MCF 10A (cell line): ENCODE measurements at regions of chr6 and their contacts with region 1.

Region 1: DNA sequence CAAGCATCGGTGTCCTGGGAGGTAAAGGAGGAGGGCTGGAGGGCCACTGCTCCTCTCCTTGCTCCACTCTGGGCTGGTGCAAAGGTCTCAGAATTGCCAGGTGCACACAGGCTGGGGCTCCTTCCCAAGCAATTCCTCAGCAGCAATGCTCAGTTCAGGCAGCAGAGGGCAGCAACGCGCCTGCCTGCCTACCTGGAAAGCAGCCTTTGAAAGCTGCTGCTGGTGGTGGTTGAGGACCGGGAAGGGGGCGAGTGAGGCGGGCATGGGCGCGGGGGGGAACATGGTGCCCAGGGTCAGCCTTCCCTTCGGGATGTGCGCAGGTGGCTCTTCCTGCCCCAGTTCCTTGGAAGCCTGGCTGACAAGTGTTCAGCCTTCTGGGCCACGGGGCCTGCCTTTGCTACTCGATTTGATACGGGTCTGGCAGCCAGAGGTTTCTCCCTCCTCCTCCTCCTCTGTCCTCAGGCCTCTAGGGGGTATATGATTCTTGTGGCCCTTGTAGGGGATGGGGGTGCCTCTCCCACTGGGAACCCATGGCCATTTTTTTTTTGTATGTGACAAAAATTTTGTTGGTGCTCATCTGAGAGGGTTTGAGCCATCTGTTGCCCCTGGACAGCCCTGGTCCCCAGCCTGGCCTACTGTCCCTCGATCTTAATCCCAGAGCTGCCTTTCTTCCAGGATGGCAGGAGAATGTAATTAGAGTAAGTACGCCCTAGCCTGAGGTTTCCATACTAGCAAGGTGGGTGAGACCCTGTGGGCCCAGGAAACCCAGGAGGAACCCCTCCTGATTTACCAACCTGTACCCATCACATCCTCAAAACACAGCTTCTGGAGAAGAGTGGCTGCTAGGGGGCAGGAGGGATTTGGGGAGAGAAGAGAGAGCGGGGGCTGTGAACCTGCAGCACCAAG is 20.1 kb downstream of the MRPS18A start:
- DNase-seq: peak; percentile 81
- H3K4me3 Mint-ChIP-seq: peak overlapping the region; percentile 3
- H3K27ac Mint-ChIP-seq: peak overlapping the region; percentile 71
- H3K4me1 Mint-ChIP-seq: peaks cover 30% of the 10 kb centered on the region
- H3K27me3 Mint-ChIP-seq: no peaks in the 10 kb centered on the region
- CTCF ChIP-seq: peak; percentile 87

Region 2: DNA sequence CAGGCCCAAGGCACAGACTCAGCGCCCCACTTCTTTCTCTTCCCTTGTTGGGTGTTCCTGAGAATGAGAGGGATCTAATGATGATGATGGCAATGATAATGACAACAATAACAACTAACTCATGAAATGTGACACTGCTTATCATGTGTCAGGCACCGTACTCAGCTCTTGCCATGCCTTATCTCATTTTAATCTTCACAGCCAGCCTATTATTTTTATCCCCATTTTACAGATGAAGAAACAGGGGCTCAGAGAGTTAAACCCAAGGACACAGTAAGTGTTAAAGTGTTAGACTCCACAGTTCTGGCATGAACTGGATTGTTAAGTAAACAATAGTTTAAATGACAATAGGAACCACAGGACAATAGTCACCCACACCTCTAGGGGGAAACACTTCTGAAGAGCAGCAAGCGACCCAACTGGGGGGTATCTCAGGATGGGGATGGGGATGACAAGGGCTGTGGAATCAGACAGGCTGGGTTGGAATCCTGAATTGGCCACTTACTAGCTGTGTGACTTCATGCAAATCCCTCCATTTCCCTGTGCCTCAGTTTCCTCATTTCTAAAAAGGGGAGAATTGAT is 10.2 kb before region 1 on chr6:
- CTCF ChIA-PET with region 1: interaction called, 19 read pairs
- POLR2A ChIA-PET with region 1: interaction called, 4 read pairs
- intact Hi-C with region 1: no loop called
- DNase-seq: no peak
- H3K4me3 Mint-ChIP-seq: no peak overlapping the region
- H3K27ac Mint-ChIP-seq: no peak overlapping the region
- H3K4me1 Mint-ChIP-seq: no peaks in the 10 kb centered on the region
- H3K27me3 Mint-ChIP-seq: no peaks in the 10 kb centered on the region
- CTCF ChIP-seq: no peak

Region 3: GRCh38 chr6:43702534-43703440 is 35.3 kb after region 1 on chr6:
- CTCF ChIA-PET with region 1: interaction called, 6 read pairs
- POLR2A ChIA-PET with region 1: interaction called, 4 read pairs
- intact Hi-C with region 1: loop called (anchors 5 kb)
- DNase-seq: peak; percentile 97
- H3K4me3 Mint-ChIP-seq: peak overlapping the region; percentile 8
- H3K27ac Mint-ChIP-seq: peak overlapping the region; percentile 83
- H3K4me1 Mint-ChIP-seq: peaks cover 26% of the 10 kb centered on the region
- H3K27me3 Mint-ChIP-seq: no peaks in the 10 kb centered on the region
- CTCF ChIP-seq: no peak

Region 4: DNA sequence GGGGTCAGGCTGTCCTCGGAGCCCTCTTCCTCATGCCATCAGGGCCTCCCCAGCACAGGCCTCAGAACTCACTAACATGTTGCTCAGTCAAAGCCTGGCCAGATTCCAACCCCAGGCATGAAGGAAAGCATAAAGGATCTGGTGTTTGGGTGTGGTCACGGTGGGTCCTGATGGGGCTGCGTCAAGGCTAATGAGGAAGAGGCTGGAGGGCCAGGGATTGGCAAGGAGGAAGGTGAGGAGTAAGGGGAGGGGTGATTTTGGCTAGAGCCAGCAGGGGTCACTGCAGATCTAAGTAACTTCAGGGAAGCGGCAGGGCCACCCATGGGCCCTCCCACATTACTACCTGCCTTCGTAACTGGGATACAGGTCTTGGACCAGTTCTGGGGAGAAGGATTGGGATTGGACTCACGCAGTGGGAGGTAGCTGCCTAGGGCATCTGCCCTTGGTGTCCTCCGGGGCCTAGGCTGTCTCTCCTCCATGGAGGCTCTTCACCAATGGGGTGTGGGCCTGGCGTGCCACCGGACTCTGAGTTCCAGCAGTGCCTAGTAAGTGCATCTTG is 56.3 kb after region 1 on chr6:
- CTCF ChIA-PET with region 1: interaction called, 6 read pairs
- POLR2A ChIA-PET with region 1: interaction called, 7 read pairs
- intact Hi-C with region 1: loop called (anchors 1 kb)
- DNase-seq: peak; percentile 90
- H3K4me3 Mint-ChIP-seq: no peak overlapping the region
- H3K27ac Mint-ChIP-seq: no peak overlapping the region
- H3K4me1 Mint-ChIP-seq: peaks cover 31% of the 10 kb centered on the region
- H3K27me3 Mint-ChIP-seq: peaks cover 14% of the 10 kb centered on the region
- CTCF ChIP-seq: peak; percentile 66

Region 5: DNA sequence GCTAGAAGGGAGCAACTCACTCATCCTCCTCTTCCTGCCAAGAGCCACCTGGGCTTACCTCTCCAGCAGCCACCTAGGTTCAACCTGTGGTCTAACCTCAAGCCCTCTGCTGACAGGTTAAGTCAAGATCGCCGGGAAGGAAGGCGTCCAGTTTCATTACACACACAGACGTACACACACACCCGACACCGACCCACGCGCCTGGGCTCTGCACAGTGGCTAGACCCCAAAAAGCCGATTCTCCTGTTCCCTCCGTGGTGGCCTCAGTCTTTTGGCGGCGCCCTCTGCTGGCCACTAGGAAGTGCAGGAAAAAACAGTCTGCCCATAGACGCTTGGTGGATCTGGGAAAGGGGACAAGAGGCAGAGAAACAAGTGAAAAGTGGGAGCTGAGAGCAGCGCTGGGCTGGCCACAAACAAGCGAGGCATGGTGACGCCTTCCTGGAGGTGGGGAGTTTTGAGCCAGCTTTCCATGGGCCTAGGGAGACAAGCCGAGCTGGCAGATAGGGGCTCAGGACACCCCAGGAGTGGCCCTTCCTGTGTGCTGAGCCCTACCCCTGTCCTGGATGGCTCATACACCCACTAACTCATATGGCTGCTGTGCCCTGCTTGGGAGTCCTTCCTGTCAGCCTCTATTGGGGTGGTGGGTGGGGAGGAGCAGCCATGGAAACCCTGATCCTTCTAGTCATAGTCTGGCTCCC is 407.1 kb after region 1 on chr6:
- CTCF ChIA-PET with region 1: interaction called, 58 read pairs
- POLR2A ChIA-PET with region 1: interaction called, 5 read pairs
- intact Hi-C with region 1: loop called (anchors 1 kb)
- DNase-seq: peak; percentile 82
- H3K4me3 Mint-ChIP-seq: peak overlapping the region; percentile 71
- H3K27ac Mint-ChIP-seq: no peak overlapping the region
- H3K4me1 Mint-ChIP-seq: peaks cover 25% of the 10 kb centered on the region
- H3K27me3 Mint-ChIP-seq: no peaks in the 10 kb centered on the region
- CTCF ChIP-seq: peak; percentile 84